Brain microvascular endothelial cell (primary cell): ENCODE measurements at regions of chr6 and their contacts with region 1.

Region 1: DNA sequence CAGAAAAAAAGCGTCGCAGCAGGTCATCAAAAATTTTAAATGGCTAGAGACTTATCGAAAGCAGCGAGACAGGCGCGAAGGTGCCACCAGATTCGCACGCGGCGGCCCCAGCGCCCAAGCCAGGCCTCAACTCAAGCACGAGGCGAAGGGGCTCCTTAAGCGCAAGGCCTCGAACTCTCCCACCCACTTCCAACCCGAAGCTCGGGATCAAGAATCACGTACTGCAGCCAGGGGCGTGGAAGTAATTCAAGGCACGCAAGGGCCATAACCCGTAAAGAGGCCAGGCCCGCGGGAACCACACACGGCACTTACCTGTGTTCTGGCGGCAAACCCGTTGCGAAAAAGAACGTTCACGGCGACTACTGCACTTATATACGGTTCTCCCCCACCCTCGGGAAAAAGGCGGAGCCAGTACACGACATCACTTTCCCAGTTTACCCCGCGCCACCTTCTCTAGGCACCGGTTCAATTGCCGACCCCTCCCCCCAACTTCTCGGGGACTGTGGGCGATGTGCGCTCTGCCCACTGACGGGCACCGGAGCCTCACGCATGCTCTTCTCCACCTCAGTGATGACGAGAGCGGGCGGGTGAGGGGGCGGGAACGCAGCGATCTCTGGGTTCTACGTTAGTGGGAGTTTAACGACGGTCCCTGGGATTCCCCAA is at the start of gene EEF1A1:
- DNase-seq: peak; percentile 100
- H3K4me3 ChIP-seq: peak within 1 kb of the TSS; percentile 100
- H3K27ac ChIP-seq: peak within 1 kb of the TSS; percentile 99
- H3K27me3 ChIP-seq: no peaks in the 10 kb centered on the region
- CTCF ChIP-seq: no peak

Region 2: GRCh38 chr6:73461537-73462350 is 59.1 kb before region 1 on chr6 and contains the start of gene MTO1:
- in situ Hi-C with region 1: no loop called
- DNase-seq: peak; percentile 89
- H3K4me3 ChIP-seq: peak within 1 kb of the TSS; percentile 99
- H3K27ac ChIP-seq: peak within 1 kb of the TSS; percentile 87
- H3K27me3 ChIP-seq: no peaks in the 10 kb centered on the region
- CTCF ChIP-seq: no peak

Region 3: GRCh38 chr6:73610444-73611275 is 89.8 kb after region 1 on chr6:
- in situ Hi-C with region 1: loop called (anchors 25 kb)
- DNase-seq: no peak
- H3K4me3 ChIP-seq: no peak overlapping the region
- H3K27ac ChIP-seq: no peak overlapping the region
- H3K27me3 ChIP-seq: no peaks in the 10 kb centered on the region
- CTCF ChIP-seq: peak; percentile 49

Region 4: DNA sequence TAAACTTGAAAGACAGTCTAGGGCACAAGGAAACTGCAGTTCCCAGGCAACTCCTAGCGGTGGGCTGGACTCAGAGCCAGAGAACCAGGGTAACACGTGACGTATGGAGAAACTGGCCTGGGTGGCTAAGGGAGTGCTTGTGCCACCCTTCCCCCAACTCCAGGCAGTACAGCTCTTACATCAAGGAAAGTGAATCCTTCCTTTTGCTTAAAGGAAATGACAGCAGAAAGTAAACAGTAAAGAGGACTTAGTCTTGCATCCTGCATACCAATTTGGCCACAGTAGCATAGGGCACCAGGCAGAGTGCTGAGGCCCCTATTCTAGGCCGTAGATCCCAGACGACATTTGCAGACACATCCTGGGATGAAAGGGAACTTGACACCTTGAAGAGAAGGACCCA is 498.0 kb after region 1 on chr6:
- in situ Hi-C with region 1: no loop called
- DNase-seq: peak; percentile 35
- H3K4me3 ChIP-seq: no peak overlapping the region
- H3K27ac ChIP-seq: no peak overlapping the region
- H3K27me3 ChIP-seq: no peaks in the 10 kb centered on the region
- CTCF ChIP-seq: no peak